ENCODE measurements at regions of chr15 and their contacts with region 1.

Region 1: DNA sequence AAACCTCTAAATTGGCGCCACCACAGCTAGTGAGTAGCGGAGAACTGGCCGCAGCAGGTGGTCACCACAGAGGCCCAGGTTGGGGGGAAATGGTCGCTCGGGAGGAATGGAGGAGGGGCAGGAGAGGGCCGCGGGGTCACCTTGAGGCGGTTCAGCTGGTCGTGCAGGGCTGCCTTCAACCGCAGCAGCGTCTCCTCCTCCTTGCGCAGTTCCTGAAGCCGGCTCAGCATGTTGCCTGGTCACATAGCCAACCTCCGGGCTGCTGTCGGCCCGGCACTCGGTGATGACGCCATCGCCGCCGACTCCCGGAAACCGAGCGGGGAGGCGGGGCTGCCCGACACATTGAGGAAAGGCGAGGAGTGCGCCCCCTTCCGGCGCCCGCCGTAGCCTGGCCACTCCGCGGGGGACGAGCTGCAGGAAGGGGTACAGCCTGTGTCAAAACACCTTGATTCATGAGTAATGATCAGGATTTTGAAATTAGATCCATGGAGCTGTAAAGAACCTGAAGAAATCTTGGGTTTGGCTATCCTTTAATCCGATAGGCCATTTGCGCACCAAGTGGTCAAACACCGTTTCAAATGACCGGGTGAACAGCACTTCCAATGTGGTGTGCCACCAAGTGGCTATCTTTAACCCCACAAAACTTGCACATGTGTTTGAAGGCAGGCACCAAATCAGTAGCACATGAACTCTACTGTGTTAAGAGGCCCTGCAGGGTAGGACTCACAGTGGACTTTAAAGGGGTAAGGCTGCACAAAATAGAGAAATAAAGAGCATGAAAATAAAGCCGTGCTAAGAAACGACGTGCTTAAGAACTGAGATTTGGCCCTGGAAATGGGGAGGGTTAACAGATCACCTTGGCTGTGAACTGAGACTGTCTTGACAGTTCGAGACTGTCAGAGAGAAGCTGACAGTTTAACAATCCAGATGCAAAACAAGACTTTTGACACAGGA is at the start of gene SNAPC5:
- DNase-seq: peak; percentile 99
- ATAC-seq: peak; percentile 85
- H3K4me3 Mint-ChIP-seq: peak within 1 kb of the TSS; percentile 92
- H3K27ac Mint-ChIP-seq: peak within 1 kb of the TSS; percentile 92
- H3K4me1 Mint-ChIP-seq: peaks cover 58% of the 10 kb centered on the region
- H3K27me3 Mint-ChIP-seq: no peaks in the 10 kb centered on the region
- CTCF ChIP-seq: peak; percentile 98
- total RNA-seq, gene SNAPC5: 27.7 to 31.4 TPM

Region 2: DNA sequence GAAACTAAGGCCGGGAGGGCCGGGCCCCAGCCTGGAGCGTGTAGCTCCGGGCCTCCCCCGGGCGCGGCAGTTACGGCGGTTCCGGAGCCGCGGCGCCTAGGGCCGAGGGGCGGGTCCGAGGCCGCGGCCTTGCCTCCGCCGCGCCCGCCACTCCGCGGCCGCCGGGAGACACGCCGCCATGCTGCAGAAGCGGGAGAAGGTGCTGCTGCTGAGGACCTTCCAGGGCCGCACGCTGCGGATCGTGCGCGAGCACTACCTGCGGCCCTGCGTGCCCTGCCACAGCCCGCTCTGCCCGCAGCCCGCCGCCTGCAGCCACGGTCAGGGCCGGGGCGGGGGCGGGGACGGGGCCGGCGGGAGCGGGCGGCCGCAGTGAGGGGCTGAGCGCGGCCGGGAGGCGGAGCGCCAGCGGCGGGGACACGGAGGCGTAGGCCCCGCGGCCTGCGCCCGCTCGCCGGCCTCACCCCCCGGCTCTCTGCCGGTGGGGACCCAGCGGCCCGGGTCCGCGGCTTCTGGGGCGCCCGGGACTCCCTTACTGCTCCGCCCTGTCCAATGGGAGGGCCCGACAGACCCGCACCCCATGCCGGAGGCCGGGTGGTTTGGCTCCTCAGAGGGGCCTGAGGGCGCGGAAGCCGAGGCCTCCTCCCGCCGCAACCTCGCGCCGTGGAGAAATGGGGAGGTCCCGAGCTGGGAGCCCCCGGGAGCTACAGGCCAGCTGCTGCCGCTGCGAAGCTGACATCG is 204.2 kb before region 1 on chr15 and contains the start of gene DIS3L:
- CTCF ChIA-PET with region 1: interaction called, 5 read pairs
- POLR2A ChIA-PET with region 1: interaction called, 17 read pairs
- intact Hi-C with region 1: loop called (anchors 5 kb)
- DNase-seq: peak; percentile 62
- ATAC-seq: peak; percentile 73
- H3K4me3 Mint-ChIP-seq: peak within 1 kb of the TSS; percentile 89
- H3K27ac Mint-ChIP-seq: peak within 1 kb of the TSS; percentile 94
- H3K4me1 Mint-ChIP-seq: peaks cover 42% of the 10 kb centered on the region
- H3K27me3 Mint-ChIP-seq: no peaks in the 10 kb centered on the region
- CTCF ChIP-seq: no peak
- total RNA-seq, gene DIS3L: 23.6 to 23.7 TPM

Region 3: GRCh38 chr15:66356345-66357236 is 141.2 kb before region 1 on chr15 and contains the start of gene TIPIN:
- CTCF ChIA-PET with region 1: interaction called, 39 read pairs
- POLR2A ChIA-PET with region 1: interaction called, 21 read pairs
- intact Hi-C with region 1: loop called (anchors 10 kb)
- DNase-seq: peak; percentile 99
- ATAC-seq: peak; percentile 97
- H3K4me3 Mint-ChIP-seq: peak within 1 kb of the TSS; percentile 94
- H3K27ac Mint-ChIP-seq: peak within 1 kb of the TSS; percentile 99
- H3K4me1 Mint-ChIP-seq: peaks cover 24% of the 10 kb centered on the region
- H3K27me3 Mint-ChIP-seq: no peaks in the 10 kb centered on the region
- CTCF ChIP-seq: no peak
- total RNA-seq, gene TIPIN: 49.8 to 50.1 TPM

Region 4: DNA sequence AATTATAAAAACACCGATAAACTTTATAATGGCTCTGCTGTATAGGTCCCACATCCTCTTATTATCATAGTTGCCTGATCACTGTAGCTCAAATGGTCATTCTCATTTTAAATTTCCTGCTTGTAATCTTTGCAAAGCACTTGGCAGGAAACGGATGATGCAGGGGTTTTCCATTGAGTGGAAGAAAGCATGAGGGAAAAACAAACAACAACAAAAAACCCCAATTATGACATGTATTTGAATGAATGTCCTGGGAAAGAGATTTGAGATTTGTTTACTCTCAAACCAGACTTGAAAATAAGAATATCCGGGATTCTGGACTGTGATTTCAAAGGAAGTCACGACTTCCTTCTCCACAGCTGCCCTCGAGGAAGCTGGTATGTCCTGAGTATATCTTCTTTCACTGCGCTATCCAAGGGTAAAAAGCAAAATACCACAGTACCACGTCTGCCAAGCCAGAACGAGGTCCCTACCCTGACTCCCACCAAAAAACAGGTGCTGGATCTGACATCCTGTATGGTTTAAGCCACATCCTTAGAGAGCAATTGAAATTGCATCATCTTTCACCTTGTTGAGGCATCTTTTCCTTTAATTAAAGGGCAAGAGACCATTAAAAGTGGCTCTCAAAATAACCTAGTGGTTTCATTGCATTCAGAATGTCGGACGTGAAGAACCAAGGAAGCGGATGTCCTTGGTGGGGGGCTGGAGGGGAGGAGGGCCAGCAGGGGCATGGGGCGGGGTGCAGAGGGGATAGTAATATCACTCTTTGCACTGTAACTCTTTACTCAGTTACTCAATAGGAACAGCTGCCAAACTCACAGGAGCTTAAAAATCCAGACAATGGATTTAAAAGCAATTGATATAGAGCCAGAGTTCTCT is 127.8 kb before region 1 on chr15:
- CTCF ChIA-PET with region 1: interaction called, 11 read pairs
- POLR2A ChIA-PET with region 1: interaction called, 12 read pairs
- intact Hi-C with region 1: no loop called
- DNase-seq: peak; percentile 70
- ATAC-seq: peak; percentile 93
- H3K4me3 Mint-ChIP-seq: peak overlapping the region; percentile 49
- H3K27ac Mint-ChIP-seq: peak overlapping the region; percentile 90
- H3K4me1 Mint-ChIP-seq: peaks cover 14% of the 10 kb centered on the region
- H3K27me3 Mint-ChIP-seq: no peaks in the 10 kb centered on the region
- CTCF ChIP-seq: no peak

Region 5: DNA sequence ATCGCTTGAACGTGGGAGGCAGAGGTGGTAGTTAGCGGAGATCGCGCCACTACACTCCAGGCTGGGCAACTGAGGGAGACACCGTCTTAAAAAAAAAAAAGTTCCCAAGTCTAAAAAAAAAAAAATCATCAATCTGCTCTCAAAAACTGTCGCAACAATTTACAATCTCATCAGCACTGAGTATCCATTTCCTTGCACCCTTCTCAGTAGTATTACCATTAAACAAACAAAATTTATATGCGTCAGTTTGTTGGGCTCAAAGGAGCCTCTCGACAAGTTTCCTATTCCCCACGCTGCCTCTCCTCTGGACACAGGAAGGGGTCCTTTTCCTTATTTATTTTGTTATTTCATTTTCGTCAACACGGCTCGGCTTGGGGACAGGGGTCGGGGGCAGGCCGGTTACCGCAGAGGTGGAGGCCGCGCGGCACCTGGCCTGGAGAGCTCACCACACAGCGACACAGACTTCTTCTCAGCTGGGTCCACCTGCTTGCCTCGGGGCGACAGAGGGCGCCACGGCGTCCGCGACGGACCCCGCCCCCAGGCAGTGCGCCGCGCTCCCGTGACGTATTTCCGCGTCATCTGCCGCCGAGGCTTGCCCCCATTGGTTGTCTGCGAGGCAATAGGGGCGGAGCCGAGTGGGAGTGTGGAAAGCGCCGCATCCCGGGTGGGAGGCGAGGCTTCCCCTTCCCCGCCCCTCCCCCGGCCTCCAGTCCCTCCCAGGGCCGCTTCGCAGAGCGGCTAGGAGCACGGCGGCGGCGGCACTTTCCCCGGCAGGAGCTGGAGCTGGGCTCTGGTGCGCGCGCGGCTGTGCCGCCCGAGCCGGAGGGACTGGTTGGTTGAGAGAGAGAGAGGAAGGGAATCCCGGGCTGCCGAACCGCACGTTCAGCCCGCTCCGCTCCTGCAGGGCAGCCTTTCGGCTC is 111.3 kb before region 1 on chr15 and contains the start of gene MAP2K1:
- CTCF ChIA-PET with region 1: interaction called, 65 read pairs
- POLR2A ChIA-PET with region 1: interaction called, 65 read pairs
- intact Hi-C with region 1: loop called (anchors 5 kb)
- DNase-seq: peak; percentile 98
- ATAC-seq: peak; percentile 87
- H3K4me3 Mint-ChIP-seq: peak within 1 kb of the TSS; percentile 95
- H3K27ac Mint-ChIP-seq: peak within 1 kb of the TSS; percentile 100
- H3K4me1 Mint-ChIP-seq: peaks cover 40% of the 10 kb centered on the region
- H3K27me3 Mint-ChIP-seq: no peaks in the 10 kb centered on the region
- CTCF ChIP-seq: peak; percentile 69
- total RNA-seq, gene MAP2K1: 117 to 118 TPM

Region 6: DNA sequence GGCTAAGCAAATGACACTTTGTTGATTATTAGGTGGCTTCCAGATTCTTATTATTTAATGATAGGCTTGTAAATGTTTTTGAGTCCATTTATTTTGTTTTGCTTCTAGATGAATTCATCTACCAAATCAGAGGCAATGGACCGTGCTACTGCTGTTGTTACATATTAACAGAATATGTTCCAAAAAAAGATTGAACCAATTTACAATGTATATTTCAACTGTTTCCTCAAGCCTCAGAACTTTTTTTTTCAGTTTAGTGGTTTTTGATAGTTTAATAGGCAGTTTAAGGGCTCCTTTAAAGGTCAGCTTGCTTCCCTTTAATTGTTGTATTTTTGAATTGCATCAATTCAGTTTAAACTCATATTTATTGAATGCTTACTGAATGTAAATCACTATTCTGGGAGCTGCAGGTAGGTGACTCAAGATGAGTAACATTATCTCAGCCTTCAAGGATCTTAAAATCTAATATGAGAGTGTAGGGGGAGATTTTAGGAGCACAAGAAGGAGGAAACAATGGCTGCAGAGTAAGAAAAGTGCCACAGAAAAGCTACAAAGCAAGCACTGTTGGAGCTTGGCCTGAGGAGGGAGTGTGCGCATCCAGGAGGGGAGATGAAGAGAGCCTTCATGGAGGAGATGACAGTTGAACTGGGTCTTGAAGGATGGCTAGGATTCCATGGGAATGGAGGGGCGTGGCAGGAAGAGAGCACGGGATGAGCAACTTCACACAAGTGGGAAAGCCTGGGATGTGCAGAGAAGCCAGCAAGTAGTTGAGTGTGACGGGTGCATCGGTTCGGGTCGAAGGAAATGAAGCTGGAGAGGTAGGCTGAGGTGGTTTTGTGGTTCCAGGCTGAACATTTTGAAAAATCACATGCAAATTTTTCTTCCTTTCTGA is 96.4 kb before region 1 on chr15:
- CTCF ChIA-PET with region 1: interaction called, 13 read pairs
- POLR2A ChIA-PET with region 1: interaction called, 7 read pairs
- intact Hi-C with region 1: no loop called
- DNase-seq: peak; percentile 49
- ATAC-seq: peak; percentile 74
- H3K4me3 Mint-ChIP-seq: peak overlapping the region; percentile 40
- H3K27ac Mint-ChIP-seq: peak overlapping the region; percentile 40
- H3K4me1 Mint-ChIP-seq: peaks cover 70% of the 10 kb centered on the region
- H3K27me3 Mint-ChIP-seq: no peaks in the 10 kb centered on the region
- CTCF ChIP-seq: no peak

Region 7: DNA sequence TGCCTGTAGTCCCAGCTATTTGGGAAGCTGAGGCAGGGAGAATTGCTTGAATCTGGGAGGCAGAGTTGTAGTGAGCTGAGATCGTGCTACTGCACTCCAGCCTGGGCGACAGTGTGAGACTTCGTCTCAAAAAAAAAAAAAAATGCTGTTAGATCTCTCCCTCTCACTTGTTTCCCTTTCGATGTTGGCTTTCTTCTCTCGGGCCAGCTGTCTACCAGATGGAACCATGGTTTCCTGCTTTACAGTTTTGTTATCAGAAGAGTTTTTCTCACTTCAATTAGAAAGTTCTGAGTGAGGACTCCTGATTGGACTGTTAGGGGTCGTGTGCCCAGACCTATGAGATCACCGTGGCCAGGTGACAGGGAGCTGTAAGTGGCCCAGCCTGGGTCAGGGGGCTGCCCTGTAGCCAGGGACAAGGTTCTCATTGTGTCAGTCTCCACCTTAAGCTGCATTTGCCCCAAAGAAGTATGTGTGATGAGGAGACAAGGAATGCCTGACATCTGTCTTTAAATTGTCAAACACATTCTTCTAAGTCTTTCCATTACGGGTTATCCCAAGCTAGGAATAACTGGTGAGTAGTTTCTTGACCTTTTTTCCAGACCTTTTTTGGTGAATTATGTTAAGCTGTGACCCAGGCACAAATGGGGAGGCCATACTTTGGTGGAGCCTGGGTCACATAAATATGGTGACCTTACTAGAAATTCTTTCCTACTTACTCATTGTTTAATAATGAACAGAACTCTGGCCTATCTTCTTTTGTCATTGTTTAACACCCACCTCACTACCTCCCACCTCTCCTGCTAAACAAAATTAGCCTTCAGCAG is 25.4 kb before region 1 on chr15:
- CTCF ChIA-PET with region 1: interaction called, 23 read pairs
- POLR2A ChIA-PET with region 1: interaction called, 12 read pairs
- intact Hi-C with region 1: no loop called
- DNase-seq: peak; percentile 70
- ATAC-seq: peak; percentile 92
- H3K4me3 Mint-ChIP-seq: peak overlapping the region; percentile 13
- H3K27ac Mint-ChIP-seq: peak overlapping the region; percentile 83
- H3K4me1 Mint-ChIP-seq: peaks cover 56% of the 10 kb centered on the region
- H3K27me3 Mint-ChIP-seq: no peaks in the 10 kb centered on the region
- CTCF ChIP-seq: no peak

Region 8: GRCh38 chr15:66803182-66803729 is 305.5 kb after region 1 on chr15:
- CTCF ChIA-PET with region 1: no interaction called
- POLR2A ChIA-PET with region 1: no interaction called
- intact Hi-C with region 1: no loop called
- DNase-seq: no peak
- ATAC-seq: no peak
- H3K4me3 Mint-ChIP-seq: no peak overlapping the region
- H3K27ac Mint-ChIP-seq: no peak overlapping the region
- H3K4me1 Mint-ChIP-seq: no peaks in the 10 kb centered on the region
- H3K27me3 Mint-ChIP-seq: peaks cover 2% of the 10 kb centered on the region
- CTCF ChIP-seq: no peak

Measured in activated CD8-positive, alpha-beta T cell treated with anti-CD3 and anti-CD28 coated beads for 36 hours (primary cell).